Dendritic cell treated with granulocyte-macrophage colony-stimulating factor and Interleukin-4, amounts not matched to agents 40 ng/mL and 50 ng/mL, for 4 days (primary cell): ENCODE measurements at regions of chr19 and their contacts with region 1.

Region 1: GRCh38 chr19:46513461-46514236 is 18.0 kb upstream of the PNMA8B start:
- H3K4me3 Mint-ChIP-seq: no peak overlapping the region
- H3K27ac Mint-ChIP-seq: no peak overlapping the region
- H3K4me1 Mint-ChIP-seq: peaks cover 8% of the 10 kb centered on the region
- H3K27me3 Mint-ChIP-seq: peaks cover 37% of the 10 kb centered on the region

Region 2: GRCh38 chr19:46283771-46284170 is 229.9 kb before region 1 on chr19:
- intact Hi-C with region 1: loop called (anchors 2 kb)
- H3K4me3 Mint-ChIP-seq: no peak overlapping the region
- H3K27ac Mint-ChIP-seq: no peak overlapping the region
- H3K4me1 Mint-ChIP-seq: no peaks in the 10 kb centered on the region
- H3K27me3 Mint-ChIP-seq: peaks cover 10% of the 10 kb centered on the region

Region 3: DNA sequence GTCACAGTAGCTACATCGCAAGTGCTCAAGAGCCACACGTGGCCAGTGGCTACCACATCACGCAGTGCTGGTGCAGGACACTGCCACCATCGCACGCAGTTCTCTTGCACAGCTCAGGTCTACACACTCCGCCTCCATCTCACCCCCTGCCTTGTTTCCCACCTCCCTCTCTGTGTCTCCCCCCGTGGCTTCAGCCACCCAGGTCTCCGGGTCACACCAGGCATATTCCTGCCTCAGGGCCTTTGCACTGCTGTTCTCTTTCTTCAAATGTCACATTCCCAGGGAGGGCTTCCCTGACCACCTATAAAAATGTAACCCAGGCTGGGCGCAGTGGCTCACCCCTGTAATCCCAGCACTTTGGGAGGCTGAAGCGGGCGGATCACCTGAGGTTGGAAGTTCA is 110.9 kb before region 1 on chr19:
- intact Hi-C with region 1: loop called (anchors 1 kb)
- H3K4me3 Mint-ChIP-seq: no peak overlapping the region
- H3K27ac Mint-ChIP-seq: no peak overlapping the region
- H3K4me1 Mint-ChIP-seq: peaks cover 21% of the 10 kb centered on the region
- H3K27me3 Mint-ChIP-seq: peaks cover 82% of the 10 kb centered on the region

Region 4: DNA sequence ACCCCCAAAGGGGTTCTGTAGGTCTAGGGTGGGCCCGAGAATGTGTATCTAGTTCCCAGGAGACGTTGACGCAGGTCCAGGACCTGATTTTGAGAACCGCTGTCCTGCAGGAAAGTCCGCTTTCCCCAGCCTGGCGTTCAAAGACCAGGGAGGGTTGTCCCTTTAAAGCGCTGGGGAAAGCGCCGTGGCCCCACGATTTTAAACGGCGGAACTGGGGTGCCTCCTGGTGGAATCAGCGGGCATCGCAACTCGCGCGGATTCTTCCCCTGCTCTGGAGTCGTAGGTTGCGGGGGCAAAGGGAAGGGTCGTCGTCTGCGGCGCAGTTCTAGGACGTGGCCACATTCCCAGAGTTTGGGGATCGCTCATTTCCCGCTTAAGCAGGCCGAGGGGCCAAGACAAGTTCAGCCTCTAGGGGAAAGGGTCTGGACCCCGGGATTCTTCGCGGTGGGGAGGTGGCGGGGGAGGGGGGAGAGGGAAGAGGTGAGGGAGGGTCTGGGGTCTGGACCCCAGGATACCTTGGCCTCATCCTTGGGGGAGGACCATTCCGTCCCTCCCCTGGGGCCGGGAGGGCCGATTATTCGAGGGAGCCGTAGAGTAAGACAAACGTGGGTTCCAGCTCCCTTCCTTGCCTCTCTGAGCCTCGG is 25.7 kb before region 1 on chr19:
- intact Hi-C with region 1: loop called (anchors 1 kb)
- H3K4me3 Mint-ChIP-seq: no peak overlapping the region
- H3K27ac Mint-ChIP-seq: no peak overlapping the region
- H3K4me1 Mint-ChIP-seq: peaks cover 40% of the 10 kb centered on the region
- H3K27me3 Mint-ChIP-seq: peaks cover 89% of the 10 kb centered on the region

Region 5: GRCh38 chr19:46542428-46543230 is 29.0 kb after region 1 on chr19:
- intact Hi-C with region 1: loop called (anchors 1 kb)
- H3K4me3 Mint-ChIP-seq: no peak overlapping the region
- H3K27ac Mint-ChIP-seq: no peak overlapping the region
- H3K4me1 Mint-ChIP-seq: peaks cover 30% of the 10 kb centered on the region
- H3K27me3 Mint-ChIP-seq: peaks cover 1% of the 10 kb centered on the region

Region 6: DNA sequence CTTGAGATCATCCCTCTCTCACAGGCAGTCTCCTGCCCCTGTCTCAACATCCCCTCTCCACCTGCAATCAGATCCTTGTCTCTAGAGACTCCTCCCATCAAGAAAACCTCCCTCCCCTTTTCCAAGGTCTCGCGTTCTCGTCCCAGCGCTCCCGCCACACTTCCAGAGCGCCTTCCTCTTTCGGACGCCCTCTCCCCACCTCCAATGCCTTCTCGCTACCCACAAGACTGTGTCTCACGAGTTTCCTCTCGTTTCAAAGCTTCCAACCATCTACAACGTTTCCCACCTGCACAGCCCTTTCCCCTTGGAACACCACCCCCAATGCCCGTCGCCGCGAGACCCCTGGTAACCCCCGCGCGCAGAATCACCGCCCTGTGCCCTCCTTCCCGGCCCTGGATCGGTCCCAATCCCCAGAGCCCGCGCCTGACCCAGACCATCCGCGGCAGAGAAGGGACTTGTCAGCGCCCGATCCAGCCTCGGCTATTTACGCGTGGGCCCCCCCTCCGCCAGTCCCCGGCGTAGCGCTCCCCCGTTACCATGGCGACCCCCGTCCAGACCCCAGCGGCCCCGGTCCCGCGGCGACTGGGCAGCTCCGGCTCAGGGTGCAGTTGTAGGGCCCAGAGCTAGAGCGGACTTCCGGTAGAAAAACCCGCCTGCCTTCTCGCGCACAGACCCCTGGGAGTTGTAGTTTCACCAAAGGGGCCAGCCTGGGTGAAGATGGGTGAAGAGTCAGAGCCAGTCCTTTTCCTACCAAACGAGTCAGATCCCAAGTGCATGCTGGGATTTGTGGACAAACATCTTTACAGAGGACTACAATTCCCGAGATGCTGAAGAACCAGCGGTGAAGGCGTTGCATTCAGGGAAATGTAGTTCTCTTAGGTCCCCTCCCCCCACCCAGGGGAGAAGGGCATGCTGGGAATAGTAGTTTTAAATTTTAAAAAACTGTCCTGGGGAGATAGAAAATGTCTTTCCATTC is 336.9 kb after region 1 on chr19 and contains the start of gene AP2S1:
- intact Hi-C with region 1: no loop called
- H3K4me3 Mint-ChIP-seq: peak within 1 kb of the TSS; percentile 90
- H3K27ac Mint-ChIP-seq: peak within 1 kb of the TSS; percentile 90
- H3K4me1 Mint-ChIP-seq: peaks cover 44% of the 10 kb centered on the region
- H3K27me3 Mint-ChIP-seq: peaks cover 5% of the 10 kb centered on the region